ENCODE measurements at regions of chr15 and their contacts with region 1.

Region 1: GRCh38 chr15:38699633-38700230 is 135.1 kb upstream of the RASGRP1 start:
- DNase-seq: peak; percentile 40 to 87 (median 71)
- ATAC-seq: peak; percentile 56
- H3K4me3 ChIP-seq: no peak overlapping the region
- H3K4me3 Mint-ChIP-seq: no peak overlapping the region
- H3K27ac ChIP-seq: no peak overlapping the region
- H3K27ac Mint-ChIP-seq: no peak overlapping the region
- H3K4me1 ChIP-seq: peaks cover 46% of the 10 kb centered on the region
- H3K4me1 Mint-ChIP-seq: peaks cover 51% of the 10 kb centered on the region
- H3K27me3 ChIP-seq: no peaks in the 10 kb centered on the region
- H3K27me3 Mint-ChIP-seq: no peaks in the 10 kb centered on the region
- CTCF ChIP-seq: peak; percentile 98

Region 2: DNA sequence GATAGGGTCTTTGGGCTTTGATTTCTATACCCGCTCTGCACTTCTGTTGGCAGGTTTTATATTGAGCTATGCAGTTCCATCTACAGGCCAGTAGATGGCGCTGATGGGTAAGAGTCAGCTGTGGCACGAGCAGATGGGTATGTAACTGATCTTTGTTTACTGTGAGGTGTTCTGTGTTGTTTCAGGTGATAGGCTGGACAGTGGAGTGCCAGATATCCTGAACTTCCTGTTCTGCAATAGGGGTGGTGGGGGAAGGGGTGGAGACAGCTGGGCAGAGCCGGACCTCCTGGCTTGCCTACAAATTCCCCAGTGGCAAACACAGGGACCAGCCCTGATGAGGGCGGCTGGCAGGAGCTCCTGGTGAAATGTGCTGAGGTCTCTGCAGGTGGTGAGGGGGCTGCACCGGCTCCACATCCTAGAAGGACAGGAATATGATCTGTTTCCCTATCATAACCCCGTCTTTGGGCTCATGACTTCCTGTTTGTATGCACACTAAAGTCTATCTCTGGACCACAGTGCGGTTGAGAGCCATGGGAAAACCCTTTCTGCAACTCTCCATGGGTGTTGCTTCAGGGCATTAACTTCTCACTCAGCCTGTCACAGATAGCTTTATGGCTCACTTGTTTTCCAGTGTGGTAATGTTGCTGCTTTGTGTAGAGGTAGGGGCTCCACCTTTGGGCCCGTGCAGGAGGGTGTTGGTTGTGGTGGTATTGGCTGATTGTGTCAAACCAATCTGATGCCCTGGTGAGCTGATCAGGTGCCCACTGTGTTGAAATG is 259.2 kb before region 1 on chr15:
- CTCF ChIA-PET with region 1: interaction called, 102 read pairs
- POLR2A ChIA-PET with region 1: interaction called, 5 read pairs
- intact Hi-C with region 1: loop called in 1 of 2 experiments (anchors 1 kb)
- DNase-seq: peak in 8 of 9 experiments; percentile 24 to 84 (median 51)
- ATAC-seq: peak; percentile 99
- H3K4me3 ChIP-seq: no peak overlapping the region
- H3K4me3 Mint-ChIP-seq: no peak overlapping the region
- H3K27ac ChIP-seq: no peak overlapping the region
- H3K27ac Mint-ChIP-seq: no peak overlapping the region
- H3K4me1 ChIP-seq: peaks cover 4% of the 10 kb centered on the region
- H3K4me1 Mint-ChIP-seq: peaks cover 3% of the 10 kb centered on the region
- H3K27me3 ChIP-seq: no peaks in the 10 kb centered on the region
- H3K27me3 Mint-ChIP-seq: peaks cover 28% of the 10 kb centered on the region
- CTCF ChIP-seq: peak; percentile 98

Region 3: GRCh38 chr15:38474155-38474757 is 225.5 kb before region 1 on chr15:
- CTCF ChIA-PET with region 1: interaction called, 103 read pairs
- POLR2A ChIA-PET with region 1: interaction called, 3 read pairs
- intact Hi-C with region 1: loop called (anchors 1 kb)
- DNase-seq: peak in 7 of 9 experiments; percentile 13 to 85 (median 32)
- ATAC-seq: peak; percentile 99
- H3K4me3 ChIP-seq: no peak overlapping the region
- H3K4me3 Mint-ChIP-seq: no peak overlapping the region
- H3K27ac ChIP-seq: peak overlapping the region in 1 of 2 experiments; percentile 17
- H3K27ac Mint-ChIP-seq: peak overlapping the region; percentile 37
- H3K4me1 ChIP-seq: no peaks in the 10 kb centered on the region
- H3K4me1 Mint-ChIP-seq: peaks cover 9% of the 10 kb centered on the region
- H3K27me3 ChIP-seq: no peaks in the 10 kb centered on the region
- H3K27me3 Mint-ChIP-seq: no peaks in the 10 kb centered on the region
- CTCF ChIP-seq: peak; percentile 74

Region 4: GRCh38 chr15:38508647-38509046 is 191.1 kb before region 1 on chr15:
- CTCF ChIA-PET with region 1: interaction called, 30 read pairs
- POLR2A ChIA-PET with region 1: no interaction called
- intact Hi-C with region 1: no loop called
- DNase-seq: no peak
- ATAC-seq: no peak
- H3K4me3 ChIP-seq: no peak overlapping the region
- H3K4me3 Mint-ChIP-seq: no peak overlapping the region
- H3K27ac ChIP-seq: peak overlapping the region in 1 of 2 experiments; percentile 17
- H3K27ac Mint-ChIP-seq: peak overlapping the region; percentile 80
- H3K4me1 ChIP-seq: no peaks in the 10 kb centered on the region
- H3K4me1 Mint-ChIP-seq: peaks cover 10% of the 10 kb centered on the region
- H3K27me3 ChIP-seq: no peaks in the 10 kb centered on the region
- H3K27me3 Mint-ChIP-seq: no peaks in the 10 kb centered on the region
- CTCF ChIP-seq: no peak

Region 5: DNA sequence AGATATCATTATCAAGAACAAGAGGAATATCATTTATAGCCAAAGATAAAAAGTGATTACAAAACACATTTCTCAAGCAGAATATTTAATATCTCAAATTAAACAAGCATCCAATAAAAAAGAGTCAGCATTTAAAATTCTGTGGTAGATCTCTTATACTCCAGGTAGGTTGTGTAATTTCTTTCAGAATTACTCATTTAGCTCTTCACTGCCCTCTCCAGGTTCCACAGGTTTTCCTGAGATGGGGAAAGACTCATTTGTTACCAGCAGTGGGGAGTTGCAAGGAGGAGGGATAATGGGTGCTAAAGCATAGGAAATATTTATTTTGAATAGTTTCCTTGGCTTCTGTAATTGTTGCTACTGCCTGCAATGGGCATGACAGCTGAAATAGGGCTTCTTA is 52.0 kb before region 1 on chr15:
- CTCF ChIA-PET with region 1: interaction called, 508 read pairs
- POLR2A ChIA-PET with region 1: interaction called, 5 read pairs
- intact Hi-C with region 1: no loop called
- DNase-seq: no peak
- ATAC-seq: no peak
- H3K4me3 ChIP-seq: no peak overlapping the region
- H3K4me3 Mint-ChIP-seq: peak overlapping the region; percentile 53
- H3K27ac ChIP-seq: no peak overlapping the region
- H3K27ac Mint-ChIP-seq: peak overlapping the region; percentile 96
- H3K4me1 ChIP-seq: peaks cover 79% of the 10 kb centered on the region
- H3K4me1 Mint-ChIP-seq: peaks cover 85% of the 10 kb centered on the region
- H3K27me3 ChIP-seq: no peaks in the 10 kb centered on the region
- H3K27me3 Mint-ChIP-seq: no peaks in the 10 kb centered on the region
- CTCF ChIP-seq: no peak

Region 6: GRCh38 chr15:38722236-38722635 is 22.5 kb after region 1 on chr15:
- CTCF ChIA-PET with region 1: interaction called, 18 read pairs
- POLR2A ChIA-PET with region 1: no interaction called
- intact Hi-C with region 1: no loop called
- DNase-seq: no peak
- ATAC-seq: no peak
- H3K4me3 ChIP-seq: no peak overlapping the region
- H3K4me3 Mint-ChIP-seq: no peak overlapping the region
- H3K27ac ChIP-seq: no peak overlapping the region
- H3K27ac Mint-ChIP-seq: no peak overlapping the region
- H3K4me1 ChIP-seq: no peaks in the 10 kb centered on the region
- H3K4me1 Mint-ChIP-seq: no peaks in the 10 kb centered on the region
- H3K27me3 ChIP-seq: no peaks in the 10 kb centered on the region
- H3K27me3 Mint-ChIP-seq: no peaks in the 10 kb centered on the region
- CTCF ChIP-seq: no peak

Measured in CD8-positive, alpha-beta T cell (primary cell).